ENCODE measurements at regions of chr7 and their contacts with region 1.

Region 1: DNA sequence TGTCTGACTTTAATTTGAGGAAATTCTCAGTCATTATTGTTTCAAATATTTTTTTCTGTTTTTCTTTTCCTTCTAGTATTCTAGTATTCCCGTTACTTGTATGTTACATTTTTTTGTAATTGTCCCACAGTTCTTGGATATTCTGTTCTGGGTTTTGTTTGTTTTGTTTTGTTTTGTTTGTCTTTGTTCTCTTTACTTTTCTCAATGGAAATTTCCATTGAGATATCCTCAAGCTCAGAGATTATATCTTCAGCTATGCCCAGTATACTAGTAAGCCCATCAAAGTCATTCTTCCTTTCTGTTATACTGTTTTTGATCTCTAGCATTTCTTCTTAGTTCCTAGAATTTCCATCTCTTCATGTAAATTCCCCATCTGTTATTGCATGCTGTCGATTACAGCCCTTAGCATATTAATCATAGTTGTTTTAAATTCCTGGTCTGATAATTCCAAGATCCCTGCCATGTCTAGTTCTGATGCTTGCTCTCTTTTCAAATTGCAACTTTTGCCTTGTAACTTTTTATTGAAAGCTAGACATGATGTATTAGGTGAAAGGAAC is 27.8 kb downstream of the GPR37 start:
- DNase-seq: no peak
- ATAC-seq: no peak
- H3K4me3 ChIP-seq: no peak overlapping the region
- H3K27ac ChIP-seq: no peak overlapping the region
- H3K4me1 ChIP-seq: no peaks in the 10 kb centered on the region
- H3K27me3 ChIP-seq: no peaks in the 10 kb centered on the region
- CTCF ChIP-seq: no peak

Region 2: DNA sequence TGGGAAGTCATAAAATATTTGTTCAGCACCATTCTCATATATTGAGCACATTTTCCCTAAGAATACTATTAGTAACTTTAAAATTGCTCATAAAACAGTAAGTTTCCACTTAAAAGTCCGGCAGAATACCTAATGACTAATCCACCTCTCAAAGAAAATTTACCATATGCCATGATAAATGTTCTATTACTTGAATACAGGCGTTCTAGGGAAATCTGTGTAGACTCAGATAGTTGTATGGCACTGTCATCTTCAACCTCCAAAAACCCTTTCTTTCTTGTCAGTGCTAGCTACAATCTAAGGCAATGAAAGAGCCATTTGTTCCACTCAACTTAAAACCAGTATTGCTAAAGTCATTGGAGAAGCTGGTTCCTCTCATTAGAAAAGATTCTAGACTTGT is 20.5 kb after region 1 on chr7:
- intact Hi-C with region 1: loop called in 1 of 2 experiments (anchors 1 kb)
- DNase-seq: no peak
- ATAC-seq: no peak
- H3K4me3 ChIP-seq: no peak overlapping the region
- H3K27ac ChIP-seq: no peak overlapping the region
- H3K4me1 ChIP-seq: no peaks in the 10 kb centered on the region
- H3K27me3 ChIP-seq: peaks cover 0 to 16% (median 0%) of the 10 kb centered on the region in 3 donors
- CTCF ChIP-seq: no peak